OCI-LY7 (cell line): ENCODE measurements at regions of chr15 and their contacts with region 1.

Region 1: GRCh38 chr15:81274931-81275707 is 48.8 kb downstream of the STARD5 start:
- DNase-seq: peak; percentile 89
- H3K4me3 ChIP-seq: no peak overlapping the region
- H3K27ac ChIP-seq: no peak overlapping the region
- H3K4me1 ChIP-seq: peaks cover 10% of the 10 kb centered on the region
- CTCF ChIP-seq: peak; percentile 84

Region 2: GRCh38 chr15:81225161-81225671 is 49.9 kb before region 1 on chr15:
- CTCF ChIA-PET with region 1: no interaction called
- POLR2A ChIA-PET with region 1: no interaction called
- intact Hi-C with region 1: no loop called
- DNase-seq: no peak
- H3K4me3 ChIP-seq: no peak overlapping the region
- H3K27ac ChIP-seq: no peak overlapping the region
- H3K4me1 ChIP-seq: no peaks in the 10 kb centered on the region
- CTCF ChIP-seq: no peak

Region 3: GRCh38 chr15:81400640-81401236 is 125.6 kb after region 1 on chr15:
- CTCF ChIA-PET with region 1: no interaction called
- POLR2A ChIA-PET with region 1: interaction called, 6 read pairs
- intact Hi-C with region 1: loop called (anchors 1 kb)
- DNase-seq: peak; percentile 58
- H3K4me3 ChIP-seq: no peak overlapping the region
- H3K27ac ChIP-seq: no peak overlapping the region
- H3K4me1 ChIP-seq: no peaks in the 10 kb centered on the region
- CTCF ChIP-seq: peak; percentile 89